MCF 10A (cell line): ENCODE measurements at regions of chr2 and their contacts with region 1.

Region 1: DNA sequence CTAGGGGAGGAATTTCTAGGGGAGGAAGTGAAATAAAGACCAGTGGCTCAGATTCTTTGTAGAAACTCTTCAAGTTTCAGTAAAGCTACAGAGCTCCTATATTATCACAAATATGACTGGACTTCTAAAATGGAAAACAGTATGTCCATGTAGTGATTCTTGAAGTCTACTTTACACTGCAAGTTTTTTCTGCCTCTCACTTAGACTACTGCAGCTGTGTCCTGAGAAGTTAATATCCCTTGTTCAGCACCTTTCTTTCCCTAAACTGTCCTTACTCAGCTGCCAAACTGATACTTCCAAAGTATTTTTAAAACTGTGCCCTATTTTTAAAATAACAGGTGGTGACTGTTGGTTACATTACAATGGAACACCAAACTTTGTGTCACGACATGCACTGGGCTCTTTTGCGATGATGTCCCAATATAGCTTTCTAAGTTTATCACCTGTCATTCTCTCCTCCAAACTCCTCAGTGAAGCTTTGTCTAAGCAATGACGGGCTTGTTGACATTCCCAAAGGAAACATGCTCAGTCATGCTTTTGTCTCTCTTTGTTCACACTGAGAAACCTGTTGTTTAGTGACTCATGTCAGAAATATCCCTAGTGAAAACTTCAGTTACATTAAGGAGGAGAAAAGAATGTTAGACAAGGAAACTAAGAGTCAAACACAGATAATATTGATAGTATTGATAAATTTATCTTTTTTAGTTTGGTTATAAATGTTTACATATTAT is 341.1 kb downstream of the ARL6IP6 start:
- DNase-seq: peak; percentile 92
- H3K4me3 Mint-ChIP-seq: peak overlapping the region; percentile 14
- H3K27ac Mint-ChIP-seq: peak overlapping the region; percentile 70
- H3K4me1 Mint-ChIP-seq: peaks cover 15% of the 10 kb centered on the region
- H3K27me3 Mint-ChIP-seq: no peaks in the 10 kb centered on the region
- CTCF ChIP-seq: no peak

Region 2: GRCh38 chr2:152466980-152467676 is 592.4 kb before region 1 on chr2:
- CTCF ChIA-PET with region 1: no interaction called
- POLR2A ChIA-PET with region 1: no interaction called
- intact Hi-C with region 1: no loop called
- DNase-seq: peak; percentile 95
- H3K4me3 Mint-ChIP-seq: peak overlapping the region; percentile 66
- H3K27ac Mint-ChIP-seq: peak overlapping the region; percentile 95
- H3K4me1 Mint-ChIP-seq: peaks cover 55% of the 10 kb centered on the region
- H3K27me3 Mint-ChIP-seq: no peaks in the 10 kb centered on the region
- CTCF ChIP-seq: no peak

Region 3: GRCh38 chr2:153408710-153409385 is 349.3 kb after region 1 on chr2:
- CTCF ChIA-PET with region 1: no interaction called
- POLR2A ChIA-PET with region 1: no interaction called
- intact Hi-C with region 1: loop called (anchors 5 kb)
- DNase-seq: peak; percentile 64
- H3K4me3 Mint-ChIP-seq: no peak overlapping the region
- H3K27ac Mint-ChIP-seq: no peak overlapping the region
- H3K4me1 Mint-ChIP-seq: peaks cover 14% of the 10 kb centered on the region
- H3K27me3 Mint-ChIP-seq: no peaks in the 10 kb centered on the region
- CTCF ChIP-seq: no peak